Naive thymus-derived CD4-positive, alpha-beta T cell (primary cell): ENCODE measurements at regions of chr11 and their contacts with region 1.

Region 1: DNA sequence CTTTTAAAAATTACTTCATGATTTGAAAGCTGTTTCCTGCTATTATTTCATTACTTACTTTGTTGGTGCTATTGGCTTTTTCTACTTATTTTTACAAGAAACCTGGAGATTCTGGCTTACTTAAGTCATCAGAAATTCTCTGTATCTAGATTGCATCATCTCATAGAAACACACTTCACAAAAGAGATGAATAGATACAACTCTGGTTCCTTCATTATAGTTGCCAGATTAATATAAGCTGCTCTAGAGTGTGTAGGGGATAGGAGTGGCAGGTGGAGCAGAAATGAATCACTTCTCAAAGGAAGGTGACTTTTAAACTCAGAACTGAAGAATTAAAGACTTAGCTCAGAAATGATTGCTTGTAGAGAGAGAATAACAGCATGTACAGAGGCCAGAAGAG is 20.0 kb downstream of the CYP2R1 start:
- DNase-seq: no peak
- ATAC-seq: no peak
- H3K4me3 ChIP-seq: no peak overlapping the region
- H3K4me3 Mint-ChIP-seq: no peak overlapping the region
- H3K27ac ChIP-seq: no peak overlapping the region
- H3K27ac Mint-ChIP-seq: peak overlapping the region in 4 of 9 donors; percentile 3 to 62 (median 34)
- H3K4me1 ChIP-seq: no peaks in the 10 kb centered on the region
- H3K4me1 Mint-ChIP-seq: peaks cover 5 to 25% (median 13%) of the 10 kb centered on the region in 7 donors
- H3K27me3 ChIP-seq: no peaks in the 10 kb centered on the region
- H3K27me3 Mint-ChIP-seq: no peaks in the 10 kb centered on the region

Region 2: GRCh38 chr11:14886513-14886912 is 14.5 kb after region 1 on chr11:
- CTCF ChIA-PET with region 1: no interaction called
- POLR2A ChIA-PET with region 1: interaction called, 6 read pairs
- intact Hi-C with region 1: loop called in 1 of 2 experiments (anchors 1 kb)
- DNase-seq: no peak
- ATAC-seq: no peak
- H3K4me3 ChIP-seq: no peak overlapping the region
- H3K4me3 Mint-ChIP-seq: no peak overlapping the region
- H3K27ac ChIP-seq: no peak overlapping the region
- H3K27ac Mint-ChIP-seq: peak overlapping the region in 5 of 9 donors; percentile 5 to 72 (median 26)
- H3K4me1 ChIP-seq: peaks cover 3 to 27% of the 10 kb centered on the region in 2 donors
- H3K4me1 Mint-ChIP-seq: peaks cover 25 to 72% (median 57%) of the 10 kb centered on the region in 7 donors
- H3K27me3 ChIP-seq: no peaks in the 10 kb centered on the region
- H3K27me3 Mint-ChIP-seq: no peaks in the 10 kb centered on the region